Activated T-helper 2 cell treated with anti-CD3 and anti-CD28 coated beads, Interferon-gamma antibody, Interleukin-2, Interleukin-4, amounts not matched to agents 10 μg/mL and 5 μg/mL and 100 μg/mL, durations not matched to agents 14 hours and 24 hours and 36 hours (primary cell): ENCODE measurements at regions of chr9 and their contacts with region 1.

Region 1: DNA sequence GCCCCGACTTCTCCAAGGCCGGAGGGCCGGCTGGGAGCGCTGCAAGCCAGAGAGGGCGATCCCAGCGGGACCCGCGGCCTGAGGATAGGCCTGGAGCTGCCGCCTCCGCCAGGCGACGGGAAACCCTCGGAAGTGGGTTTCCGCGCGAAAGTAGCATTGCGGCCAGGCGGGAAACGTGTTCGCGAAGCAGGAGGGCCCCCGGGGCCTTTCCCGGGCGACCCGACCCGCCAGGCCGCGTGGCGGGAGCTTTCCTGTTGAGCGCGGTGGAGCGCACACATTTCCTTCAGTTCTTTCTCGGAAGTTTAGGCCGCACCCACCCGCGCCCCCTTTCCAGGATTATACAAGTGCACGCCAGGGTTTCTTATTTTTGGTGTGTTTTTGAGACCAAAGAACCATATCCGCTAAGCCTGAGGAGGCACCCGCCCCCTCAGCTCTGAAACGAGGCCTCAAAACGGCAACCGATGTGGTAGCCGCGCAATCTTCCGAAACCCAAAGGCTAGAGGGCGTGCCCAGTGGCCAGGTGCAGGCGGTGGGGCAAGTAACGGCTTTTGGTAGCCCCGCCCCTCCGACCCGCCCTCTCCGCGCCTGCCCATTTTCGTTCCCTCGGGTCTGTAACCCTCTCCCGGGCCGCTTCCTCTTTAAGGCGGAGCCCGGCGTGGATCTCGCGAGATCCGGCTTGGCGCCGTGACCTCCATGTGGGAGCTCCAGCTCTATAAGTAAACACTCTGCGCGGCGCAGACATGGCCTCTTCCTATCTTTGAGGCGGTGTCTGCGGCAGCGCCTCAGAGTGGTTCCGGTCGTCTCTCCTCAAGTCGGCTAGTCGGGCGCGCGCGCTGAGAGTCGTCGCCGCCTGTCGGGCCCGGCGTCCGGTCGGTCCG is at the start of gene UHRF2:
- DNase-seq: peak; percentile 98
- H3K4me3 Mint-ChIP-seq: peak within 1 kb of the TSS; percentile 96
- H3K27ac Mint-ChIP-seq: peak within 1 kb of the TSS; percentile 94
- H3K4me1 Mint-ChIP-seq: peaks cover 39% of the 10 kb centered on the region
- H3K27me3 Mint-ChIP-seq: peaks cover 2% of the 10 kb centered on the region
- total RNA-seq, gene UHRF2: 79.7 and 82.9 TPM in 2 replicates

Region 2: DNA sequence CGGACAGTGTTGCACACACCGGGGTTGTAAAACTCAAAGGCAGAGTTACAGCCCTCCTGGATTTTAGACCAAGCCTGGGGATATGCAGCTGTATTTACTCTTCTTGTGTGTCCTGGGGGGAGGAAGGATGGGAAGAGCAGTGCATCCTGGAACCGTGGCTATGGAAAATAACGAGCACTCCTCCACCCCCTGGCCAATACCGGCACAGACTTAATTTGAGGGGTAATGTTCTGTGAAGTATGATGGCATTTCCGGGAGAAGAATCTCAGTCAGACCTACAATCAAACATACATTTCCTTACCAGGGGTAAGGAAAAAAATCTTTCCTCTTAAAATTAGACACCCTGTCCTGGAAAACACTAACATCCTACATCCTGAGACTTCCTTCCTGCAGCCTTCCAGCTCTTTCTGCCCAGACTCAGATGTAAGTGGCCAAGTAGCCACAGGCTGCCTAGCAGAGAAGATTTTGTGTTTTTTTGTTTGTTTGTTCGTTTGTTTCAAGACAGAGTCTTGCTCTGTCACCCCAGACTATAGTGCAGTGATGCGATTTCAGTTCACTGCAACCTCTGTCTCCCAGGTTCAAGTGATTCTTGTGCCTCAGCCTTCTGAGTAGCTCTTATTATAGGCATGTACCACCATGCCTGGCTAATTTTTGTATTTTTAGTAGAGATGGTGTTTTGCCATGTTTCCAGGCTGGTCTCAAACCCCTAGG is 568.8 kb before region 1 on chr9:
- intact Hi-C with region 1: loop called (anchors 5 kb)
- DNase-seq: no peak
- H3K4me3 Mint-ChIP-seq: peak overlapping the region; percentile 64
- H3K27ac Mint-ChIP-seq: peak overlapping the region; percentile 95
- H3K4me1 Mint-ChIP-seq: peaks cover 79% of the 10 kb centered on the region
- H3K27me3 Mint-ChIP-seq: no peaks in the 10 kb centered on the region

Region 3: GRCh38 chr9:6353851-6354686 is 58.7 kb before region 1 on chr9:
- intact Hi-C with region 1: loop called (anchors 2 kb)
- DNase-seq: no peak
- H3K4me3 Mint-ChIP-seq: no peak overlapping the region
- H3K27ac Mint-ChIP-seq: no peak overlapping the region
- H3K4me1 Mint-ChIP-seq: peaks cover 15% of the 10 kb centered on the region
- H3K27me3 Mint-ChIP-seq: peaks cover 23% of the 10 kb centered on the region

Region 4: DNA sequence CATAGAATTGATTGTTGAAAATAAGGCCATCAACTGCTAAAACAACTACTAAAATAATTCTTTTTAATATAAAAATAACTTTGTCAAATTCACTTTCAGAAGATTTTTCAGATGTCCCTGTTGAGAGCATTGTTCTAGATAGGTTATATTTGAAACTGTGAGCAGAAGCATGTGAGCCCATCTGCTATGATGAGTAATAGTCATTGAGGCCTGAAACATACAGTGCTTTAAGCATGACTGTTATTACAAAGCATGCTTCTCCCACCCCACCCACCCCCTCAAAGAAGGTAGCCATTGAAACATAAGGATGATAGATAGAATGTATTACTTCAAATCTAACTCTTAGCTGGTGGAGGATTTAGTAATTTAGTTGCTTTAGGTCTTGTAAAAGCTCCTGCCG is 86.3 kb after region 1 on chr9:
- intact Hi-C with region 1: loop called (anchors 5 kb)
- DNase-seq: no peak
- H3K4me3 Mint-ChIP-seq: no peak overlapping the region
- H3K27ac Mint-ChIP-seq: no peak overlapping the region
- H3K4me1 Mint-ChIP-seq: peaks cover 8% of the 10 kb centered on the region
- H3K27me3 Mint-ChIP-seq: no peaks in the 10 kb centered on the region

Region 5: GRCh38 chr9:6703898-6704639 is 291.3 kb after region 1 on chr9:
- intact Hi-C with region 1: loop called (anchors 2 kb)
- DNase-seq: peak; percentile 82
- H3K4me3 Mint-ChIP-seq: peak overlapping the region; percentile 91
- H3K27ac Mint-ChIP-seq: peak overlapping the region; percentile 91
- H3K4me1 Mint-ChIP-seq: peaks cover 20% of the 10 kb centered on the region
- H3K27me3 Mint-ChIP-seq: peaks cover 2% of the 10 kb centered on the region